ENCODE measurements at regions of chr13 and their contacts with region 1.

Region 1: DNA sequence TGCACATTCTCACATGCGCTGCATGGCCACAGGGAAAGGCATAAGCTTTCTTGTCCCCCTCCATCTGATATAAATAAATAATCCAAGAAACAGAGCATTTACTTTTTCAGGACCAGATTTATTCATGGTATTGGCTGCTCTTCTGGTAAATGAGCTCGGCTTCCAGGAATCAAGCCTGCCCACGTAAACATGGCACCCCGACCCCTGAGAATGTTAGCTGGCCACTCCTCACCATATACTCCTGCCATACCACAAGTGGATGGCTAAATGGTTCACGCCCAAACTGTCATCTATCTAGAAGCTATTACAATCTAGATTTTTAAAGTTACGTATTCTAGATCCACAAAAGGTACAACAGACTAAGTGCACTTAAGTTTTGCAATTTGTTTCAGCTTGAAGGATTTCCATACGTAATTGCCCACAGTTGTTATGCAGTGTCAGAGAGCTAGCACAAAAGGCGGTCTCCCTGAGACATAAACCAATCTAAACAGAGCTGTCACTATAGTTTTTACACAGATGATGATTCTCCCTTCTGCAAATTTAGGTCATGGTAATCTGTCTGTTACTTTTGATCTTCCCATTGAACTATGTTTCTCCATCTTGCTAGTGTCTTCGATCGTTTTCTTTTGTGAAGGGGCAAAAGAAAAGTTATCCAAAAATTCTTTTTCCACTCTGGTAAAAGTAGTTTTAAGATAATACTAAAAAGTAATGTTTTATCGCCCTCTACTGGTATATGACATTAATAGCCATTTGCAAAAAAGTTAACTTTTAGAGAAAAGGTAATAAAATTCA is 16.2 kb upstream of the FOXO1 start:
- DNase-seq: no peak
- ATAC-seq: peak; percentile 65
- H3K4me3 ChIP-seq: no peak overlapping the region
- H3K27ac ChIP-seq: no peak overlapping the region
- H3K4me1 ChIP-seq: no peaks in the 10 kb centered on the region
- H3K27me3 ChIP-seq: peaks cover 0 to 3% of the 10 kb centered on the region in 2 experiments; a peak in 1 of 4 replicates
- CTCF ChIP-seq: peak in 1 of 3 experiments; percentile 48; a peak in 4 of 6 replicates
- EP300 ChIP-seq: no peak; a peak in 1 of 4 replicates
- POLR2A ChIP-seq: no peak
- RAD21 ChIP-seq: peak; percentile 55

Region 2: DNA sequence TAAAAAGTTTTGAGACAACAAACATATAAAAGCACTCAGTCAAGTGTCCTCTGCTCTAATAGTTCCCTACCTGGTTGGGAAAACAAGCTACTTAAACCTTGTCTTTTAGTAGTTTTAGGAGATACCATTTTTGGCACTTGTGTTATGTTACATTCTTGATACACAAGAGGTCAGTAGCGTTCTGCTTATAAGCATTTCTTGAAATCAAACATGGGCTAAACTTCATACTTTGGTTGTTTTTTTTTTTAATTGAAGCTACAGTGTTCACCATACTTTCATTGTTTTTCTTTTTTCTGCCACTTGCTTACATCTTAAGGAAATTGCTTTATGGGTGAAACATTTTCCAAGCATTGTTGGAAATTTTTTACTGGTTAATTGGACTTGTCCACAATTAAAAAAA is 1631.5 kb before region 1 on chr13:
- CTCF ChIA-PET with region 1: no interaction called
- POLR2A ChIA-PET with region 1: no interaction called
- RAD21 ChIA-PET with region 1: no interaction called
- SMC1A ChIA-PET with region 1: no interaction called
- in situ Hi-C with region 1: loop called (anchors 25 kb)
- intact Hi-C with region 1: no loop called
- DNase-seq: no peak
- ATAC-seq: peak; percentile 54
- H3K4me3 ChIP-seq: no peak overlapping the region
- H3K27ac ChIP-seq: no peak overlapping the region
- H3K4me1 ChIP-seq: no peaks in the 10 kb centered on the region
- H3K27me3 ChIP-seq: no peaks in the 10 kb centered on the region
- CTCF ChIP-seq: peak; percentile 27 to 55 (median 31); a peak in 4 of 6 replicates
- EP300 ChIP-seq: no peak
- POLR2A ChIP-seq: no peak
- RAD21 ChIP-seq: peak; percentile 76

Region 3: DNA sequence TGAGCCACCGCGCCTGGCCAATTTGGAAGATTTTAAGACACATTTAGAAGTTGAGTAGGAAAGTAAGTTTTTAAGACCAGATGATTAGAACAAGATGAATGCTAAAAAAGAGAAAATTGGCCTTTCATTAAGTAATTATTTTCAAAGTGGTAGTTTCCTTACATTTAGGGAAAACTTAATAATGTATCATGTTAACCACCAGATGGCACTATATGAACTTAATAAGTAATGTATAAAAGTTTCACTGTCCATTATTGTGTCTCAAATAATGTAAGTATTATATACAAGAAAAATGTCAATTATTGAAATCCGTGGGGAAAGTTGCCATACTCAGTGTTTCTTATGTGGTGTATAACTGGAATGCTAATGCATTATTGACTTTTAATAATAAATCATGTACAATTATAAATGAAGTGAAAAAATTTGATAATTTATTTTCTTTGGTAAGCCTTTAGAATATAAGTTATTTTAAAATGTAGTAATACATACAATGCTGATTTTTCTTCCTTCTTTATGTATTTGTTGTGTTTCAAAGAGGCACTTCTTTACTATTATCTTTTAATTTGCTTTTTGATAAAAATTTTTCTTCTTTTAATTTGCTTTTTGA is 998.0 kb before region 1 on chr13:
- CTCF ChIA-PET with region 1: interaction called, 56 read pairs
- POLR2A ChIA-PET with region 1: no interaction called
- RAD21 ChIA-PET with region 1: interaction called, 18 read pairs
- SMC1A ChIA-PET with region 1: interaction called, 22 read pairs
- in situ Hi-C with region 1: loop called (anchors 5 kb)
- intact Hi-C with region 1: loop called (anchors 1 kb)
- DNase-seq: no peak
- ATAC-seq: peak; percentile 60
- H3K4me3 ChIP-seq: no peak overlapping the region
- H3K27ac ChIP-seq: no peak overlapping the region
- H3K4me1 ChIP-seq: peaks cover 6% of the 10 kb centered on the region; the same call in 1 of the 2 replicates
- H3K27me3 ChIP-seq: no peaks in the 10 kb centered on the region
- CTCF ChIP-seq: peak in 1 of 3 experiments; percentile 18; a peak in 2 of 6 replicates
- EP300 ChIP-seq: no peak
- POLR2A ChIP-seq: no peak
- RAD21 ChIP-seq: peak; percentile 22; the same call in 1 of the 2 replicates

Region 4: DNA sequence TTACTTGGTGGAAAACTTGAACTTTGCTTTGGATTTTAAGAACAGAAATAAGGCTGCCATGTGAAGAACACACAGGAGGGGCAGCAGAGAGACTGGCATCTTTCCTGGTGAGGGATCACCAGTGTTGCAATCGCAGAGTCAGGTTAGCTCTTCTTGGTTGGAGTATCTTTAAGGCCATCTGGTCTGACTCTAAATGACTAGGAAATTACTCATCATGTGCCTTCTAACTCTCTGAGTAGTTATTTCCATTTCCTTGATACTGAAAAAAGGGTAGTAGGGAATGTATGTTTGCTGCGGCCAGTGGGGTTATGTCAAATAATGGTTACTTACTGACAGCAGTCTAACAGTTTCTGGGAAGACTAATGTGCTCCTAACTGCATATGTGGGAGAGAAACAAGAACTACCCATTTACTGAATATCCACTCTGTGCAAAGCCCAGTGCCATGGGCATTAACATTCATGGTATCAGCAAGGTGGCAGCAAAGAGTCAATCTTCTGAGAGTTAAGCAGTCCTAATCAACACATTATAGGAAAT is 905.1 kb before region 1 on chr13:
- CTCF ChIA-PET with region 1: interaction called, 8 read pairs
- POLR2A ChIA-PET with region 1: no interaction called
- RAD21 ChIA-PET with region 1: interaction called, 3 read pairs
- SMC1A ChIA-PET with region 1: no interaction called
- in situ Hi-C with region 1: loop called (anchors 10 kb)
- intact Hi-C with region 1: loop called (anchors 5 kb)
- DNase-seq: no peak
- ATAC-seq: peak; percentile 75
- H3K4me3 ChIP-seq: no peak overlapping the region
- H3K27ac ChIP-seq: no peak overlapping the region
- H3K4me1 ChIP-seq: no peaks in the 10 kb centered on the region
- H3K27me3 ChIP-seq: no peaks in the 10 kb centered on the region
- CTCF ChIP-seq: peak; percentile 14 to 20 (median 20); a peak in 2 of 6 replicates
- EP300 ChIP-seq: no peak
- POLR2A ChIP-seq: no peak
- RAD21 ChIP-seq: no peak

Region 5: DNA sequence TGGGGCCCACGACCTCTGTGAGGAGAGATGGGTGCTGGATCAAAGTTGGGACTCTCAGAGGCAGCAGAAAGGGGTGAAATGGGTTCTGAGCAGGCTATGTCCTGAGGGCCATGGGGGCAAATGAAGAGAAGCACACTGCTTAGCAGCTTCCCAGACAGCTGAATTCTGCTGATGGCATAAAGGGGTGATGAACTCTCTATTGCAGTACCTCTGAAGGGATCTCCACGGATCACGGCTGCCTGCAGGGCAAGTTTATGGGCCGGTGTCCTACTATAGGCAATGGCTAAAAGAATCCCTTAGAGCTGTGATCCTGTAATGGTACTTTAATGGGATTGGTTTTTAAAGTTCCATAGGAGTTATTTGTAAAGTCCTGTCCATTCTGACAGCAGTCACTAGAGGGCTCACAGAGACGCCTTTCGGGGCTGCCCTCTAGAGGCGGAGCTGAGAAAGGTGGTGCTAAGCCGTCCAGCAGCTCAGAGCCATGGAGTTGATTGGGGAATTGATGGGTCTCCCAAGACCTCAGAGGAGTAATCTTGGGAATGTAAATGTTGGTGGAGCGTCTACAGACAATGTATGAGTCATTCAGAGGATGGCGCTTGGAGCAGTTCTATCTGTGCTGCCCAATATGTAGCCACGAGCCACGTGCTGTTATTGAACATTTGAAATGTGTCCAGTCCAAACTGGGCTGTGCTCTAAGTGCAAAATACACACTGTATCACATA is 739.9 kb before region 1 on chr13:
- CTCF ChIA-PET with region 1: interaction called, 79 read pairs
- POLR2A ChIA-PET with region 1: no interaction called
- RAD21 ChIA-PET with region 1: interaction called, 25 read pairs
- SMC1A ChIA-PET with region 1: interaction called, 40 read pairs
- in situ Hi-C with region 1: loop called (anchors 5 kb)
- intact Hi-C with region 1: loop called (anchors 2 kb)
- DNase-seq: peak; percentile 50
- ATAC-seq: peak; percentile 100
- H3K4me3 ChIP-seq: no peak overlapping the region
- H3K27ac ChIP-seq: no peak overlapping the region
- H3K4me1 ChIP-seq: no peaks in the 10 kb centered on the region
- H3K27me3 ChIP-seq: no peaks in the 10 kb centered on the region; a peak in 2 of 4 replicates
- CTCF ChIP-seq: peak; percentile 100; a peak in 5 of 6 replicates
- EP300 ChIP-seq: no peak
- POLR2A ChIP-seq: no peak
- RAD21 ChIP-seq: peak; percentile 95

Region 6: DNA sequence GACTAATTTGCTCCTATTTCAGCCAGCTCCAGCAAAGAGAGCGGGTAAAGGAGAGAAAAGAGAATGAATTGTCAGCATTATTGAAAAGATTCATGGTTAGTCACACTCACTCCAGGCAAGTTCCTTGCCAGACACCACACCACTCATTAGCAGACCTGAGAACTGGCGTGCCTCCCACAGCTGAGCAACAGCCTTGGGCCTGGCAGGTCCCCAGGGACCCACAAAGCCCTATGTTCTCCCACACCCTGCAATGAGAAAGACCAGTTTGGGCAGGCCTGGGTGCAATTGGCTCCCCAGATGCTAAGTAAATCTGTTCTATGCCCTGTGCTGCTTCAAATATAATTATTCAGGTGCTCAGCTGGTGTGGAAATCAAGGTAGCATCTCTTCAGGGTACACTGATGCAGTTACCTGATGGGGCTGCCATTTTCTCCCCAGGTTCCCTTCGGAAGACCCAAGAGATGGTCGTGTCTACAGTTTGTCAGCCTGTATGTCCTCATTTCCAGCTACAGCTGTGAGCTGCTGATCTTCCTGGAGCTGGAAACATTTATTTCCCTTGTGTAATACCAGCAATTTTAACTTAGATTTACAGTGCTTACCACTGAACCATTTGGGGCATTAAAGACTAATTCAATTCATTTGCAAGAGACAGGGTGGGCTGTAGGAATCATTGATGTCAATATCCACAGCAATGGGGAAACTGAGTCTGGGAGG is 622.2 kb before region 1 on chr13:
- CTCF ChIA-PET with region 1: interaction called, 21 read pairs
- POLR2A ChIA-PET with region 1: interaction called, 7 read pairs
- RAD21 ChIA-PET with region 1: no interaction called
- SMC1A ChIA-PET with region 1: interaction called, 6 read pairs
- in situ Hi-C with region 1: loop called (anchors 5 kb)
- intact Hi-C with region 1: no loop called
- DNase-seq: peak; percentile 97
- ATAC-seq: peak; percentile 86
- H3K4me3 ChIP-seq: no peak overlapping the region
- H3K27ac ChIP-seq: peak overlapping the region; percentile 80
- H3K4me1 ChIP-seq: peaks cover 28% of the 10 kb centered on the region
- H3K27me3 ChIP-seq: no peaks in the 10 kb centered on the region
- CTCF ChIP-seq: no peak
- EP300 ChIP-seq: peak; percentile 65 to 79; a peak in 2 of 4 replicates
- POLR2A ChIP-seq: no peak
- RAD21 ChIP-seq: no peak

Region 7: DNA sequence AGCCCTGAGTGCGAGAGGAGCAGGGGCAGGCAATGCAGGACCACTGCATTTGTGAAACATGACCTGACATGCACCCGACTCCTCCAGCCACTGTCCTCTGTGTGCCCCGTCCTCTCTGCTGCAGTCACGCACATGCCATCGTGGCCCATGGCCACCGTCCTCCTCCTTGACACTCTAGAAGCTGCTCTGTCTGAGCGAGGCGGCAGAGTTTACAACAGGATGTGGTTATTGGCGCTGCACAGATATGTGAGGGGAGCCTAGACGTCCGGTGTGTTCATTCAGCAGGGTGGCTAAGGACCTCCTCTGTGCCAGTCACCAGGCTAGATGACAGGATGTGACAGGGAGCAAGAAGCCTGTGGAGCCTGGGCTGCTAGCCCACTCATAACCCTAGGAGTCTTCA is 294.0 kb before region 1 on chr13:
- CTCF ChIA-PET with region 1: no interaction called
- POLR2A ChIA-PET with region 1: no interaction called
- RAD21 ChIA-PET with region 1: no interaction called
- SMC1A ChIA-PET with region 1: no interaction called
- in situ Hi-C with region 1: no loop called
- intact Hi-C with region 1: no loop called
- DNase-seq: peak; percentile 70
- ATAC-seq: peak; percentile 97
- H3K4me3 ChIP-seq: peak overlapping the region; percentile 55; the same call in 1 of the 2 replicates
- H3K27ac ChIP-seq: peak overlapping the region; percentile 23
- H3K4me1 ChIP-seq: peaks cover 11% of the 10 kb centered on the region
- H3K27me3 ChIP-seq: no peaks in the 10 kb centered on the region
- CTCF ChIP-seq: no peak
- EP300 ChIP-seq: no peak
- POLR2A ChIP-seq: peak; percentile 69
- RAD21 ChIP-seq: no peak

Region 8: GRCh38 chr13:40671956-40672764 is 10.5 kb before region 1 on chr13:
- CTCF ChIA-PET with region 1: interaction called, 63 read pairs
- POLR2A ChIA-PET with region 1: interaction called, 4 read pairs
- RAD21 ChIA-PET with region 1: interaction called, 20 read pairs
- SMC1A ChIA-PET with region 1: interaction called, 39 read pairs
- in situ Hi-C with region 1: no loop called
- intact Hi-C with region 1: no loop called
- DNase-seq: no peak
- ATAC-seq: no peak
- H3K4me3 ChIP-seq: no peak overlapping the region
- H3K27ac ChIP-seq: no peak overlapping the region
- H3K4me1 ChIP-seq: peaks cover 6% of the 10 kb centered on the region
- H3K27me3 ChIP-seq: no peaks in the 10 kb centered on the region
- CTCF ChIP-seq: no peak
- EP300 ChIP-seq: no peak
- POLR2A ChIP-seq: no peak
- RAD21 ChIP-seq: no peak